Posterior vena cava (tissue), 2 donors: ENCODE measurements at regions of chr5 and their contacts with region 1.

Region 1: DNA sequence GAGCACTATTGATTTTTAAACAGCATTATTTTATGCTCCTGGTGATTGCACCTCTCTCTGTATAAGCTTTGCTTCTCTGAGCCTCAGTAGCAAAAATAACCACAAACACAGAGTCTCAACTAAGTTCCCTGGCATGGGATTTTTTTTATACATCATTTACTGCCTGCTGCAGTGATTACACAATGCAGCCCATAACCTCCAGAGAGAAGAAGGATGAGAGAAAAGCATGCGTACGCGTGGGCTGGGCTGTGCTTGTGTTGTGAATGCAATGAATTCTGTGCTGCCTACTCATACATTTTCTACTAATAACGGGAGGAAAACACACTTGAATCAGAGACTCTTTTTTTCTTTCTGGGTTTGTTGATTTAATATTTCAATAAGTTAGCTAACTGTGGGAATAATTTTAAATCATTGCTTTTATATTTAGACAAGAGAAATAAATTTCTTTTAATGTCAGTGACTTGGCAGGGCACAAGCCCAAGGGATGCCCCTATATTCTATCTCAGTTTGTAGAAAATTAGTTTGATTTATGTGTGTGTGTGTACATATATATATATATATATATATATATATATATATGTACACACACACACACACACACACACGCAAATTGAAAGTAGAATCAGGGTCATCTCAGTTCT is 351.5 kb downstream of the MED10 start:
- DNase-seq: no peak

Region 2: DNA sequence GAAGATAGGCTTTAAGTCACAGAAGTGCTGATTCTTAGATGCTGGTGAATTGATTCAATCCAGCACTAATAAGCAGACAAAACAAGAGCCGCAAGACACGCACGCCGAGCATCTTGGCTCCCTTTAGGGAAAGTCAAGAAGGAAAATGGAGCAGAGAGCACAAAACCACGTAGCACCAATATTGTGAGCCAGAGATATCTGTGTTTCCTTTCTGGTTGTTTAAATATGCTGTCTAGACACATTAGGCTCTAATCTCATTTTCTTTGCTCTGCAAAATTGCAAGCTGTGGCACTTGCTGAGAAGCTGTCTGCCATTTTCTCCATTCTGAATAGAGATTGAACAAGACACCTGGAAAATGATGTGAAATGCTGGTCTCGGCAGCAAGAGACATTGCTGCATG is 15.1 kb after region 1 on chr5:
- intact Hi-C with region 1: loop called in 1 of 2 experiments (anchors 1 kb)
- DNase-seq: no peak

Region 3: DNA sequence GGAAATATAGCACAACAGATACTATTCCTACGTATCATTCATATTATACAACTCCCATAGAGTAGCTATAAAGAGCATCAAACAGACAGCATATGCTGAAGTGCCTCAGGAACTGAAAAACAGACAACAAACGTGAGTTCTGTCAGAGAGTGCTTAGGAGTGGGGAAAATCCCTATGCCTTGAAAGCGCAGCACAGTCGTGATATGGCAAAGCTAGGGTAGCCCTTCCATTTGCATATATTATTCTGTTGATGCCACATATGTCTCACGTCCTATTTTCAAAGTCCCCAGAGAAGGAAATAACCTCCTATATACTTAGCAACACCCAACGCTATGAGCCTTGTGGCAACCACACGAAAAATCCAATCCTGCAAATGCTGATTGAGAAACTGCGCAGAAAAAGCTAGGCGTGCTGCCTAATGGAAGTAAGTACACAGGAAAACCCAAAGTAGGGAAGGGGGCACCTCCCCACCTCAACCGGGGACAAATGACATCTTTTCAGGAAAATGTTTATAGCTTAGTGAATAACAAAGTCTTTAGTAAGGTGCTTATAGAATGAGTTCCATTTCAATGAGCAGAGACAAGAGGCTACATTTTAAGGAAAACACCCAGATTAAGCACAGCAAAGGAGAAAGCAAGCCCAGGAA is 246.3 kb after region 1 on chr5:
- intact Hi-C with region 1: no loop called
- DNase-seq: no peak